Breast epithelium (tissue), 4 donors: ENCODE measurements at regions of chr17 and their contacts with region 1.

Region 1: GRCh38 chr17:9185688-9186277 is 164.5 kb downstream of the NTN1 start:
- DNase-seq: no peak
- H3K4me3 ChIP-seq: no peak overlapping the region
- H3K27ac ChIP-seq: no peak overlapping the region
- H3K4me1 ChIP-seq: no peaks in the 10 kb centered on the region
- H3K27me3 ChIP-seq: no peaks in the 10 kb centered on the region
- CTCF ChIP-seq: no peak
- POLR2A ChIP-seq: no peak

Region 2: DNA sequence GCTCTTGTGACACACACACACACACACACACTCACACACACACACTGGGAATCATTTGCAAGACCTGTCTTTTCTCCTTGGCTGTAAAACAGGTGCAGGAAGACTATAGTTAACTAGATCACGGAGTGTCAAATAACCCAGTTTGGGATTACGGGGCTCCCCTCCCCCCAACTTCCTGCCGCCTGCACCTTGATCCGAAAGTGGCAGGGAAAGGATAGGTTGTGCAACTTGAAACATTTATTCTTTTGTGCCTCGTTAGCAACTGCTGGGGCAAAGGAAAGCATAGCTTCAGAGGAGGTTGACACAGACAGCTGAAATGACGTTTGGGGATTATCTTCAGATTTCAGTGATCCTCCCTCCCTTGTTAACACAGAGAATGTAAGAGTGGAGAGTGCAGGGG is 14.9 kb before region 1 on chr17:
- intact Hi-C with region 1: loop called (anchors 2 kb)
- DNase-seq: no peak
- H3K4me3 ChIP-seq: no peak overlapping the region
- H3K27ac ChIP-seq: no peak overlapping the region
- H3K4me1 ChIP-seq: no peaks in the 10 kb centered on the region
- H3K27me3 ChIP-seq: no peaks in the 10 kb centered on the region
- CTCF ChIP-seq: no peak
- POLR2A ChIP-seq: no peak

Region 3: DNA sequence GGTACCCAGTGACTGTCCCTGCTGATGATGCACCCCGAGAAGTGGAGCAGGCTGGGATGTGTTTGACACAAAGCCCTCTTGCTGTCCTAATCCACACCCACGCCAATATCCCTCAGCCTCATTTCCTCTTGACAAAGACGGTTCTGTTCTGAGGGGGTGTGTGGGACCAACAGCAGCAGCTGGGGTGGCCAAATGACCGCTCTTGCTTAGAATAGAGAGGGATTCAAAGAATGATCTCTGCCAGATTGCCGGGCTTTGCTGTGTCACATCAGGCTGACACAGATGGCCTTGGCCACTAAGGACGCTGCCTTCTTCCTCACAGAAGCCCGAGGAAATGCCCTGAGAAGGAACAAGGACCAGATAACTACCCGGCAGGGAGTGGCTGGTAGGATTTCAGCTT is 86.2 kb after region 1 on chr17:
- intact Hi-C with region 1: no loop called
- DNase-seq: no peak
- H3K4me3 ChIP-seq: peak overlapping the region in 1 of 3 donors; percentile 18
- H3K27ac ChIP-seq: peak overlapping the region in 1 of 2 donors; percentile 3
- H3K4me1 ChIP-seq: no peaks in the 10 kb centered on the region
- H3K27me3 ChIP-seq: no peaks in the 10 kb centered on the region
- CTCF ChIP-seq: no peak
- POLR2A ChIP-seq: no peak